ENCODE measurements at regions of chr16 and their contacts with region 1.

Region 1: DNA sequence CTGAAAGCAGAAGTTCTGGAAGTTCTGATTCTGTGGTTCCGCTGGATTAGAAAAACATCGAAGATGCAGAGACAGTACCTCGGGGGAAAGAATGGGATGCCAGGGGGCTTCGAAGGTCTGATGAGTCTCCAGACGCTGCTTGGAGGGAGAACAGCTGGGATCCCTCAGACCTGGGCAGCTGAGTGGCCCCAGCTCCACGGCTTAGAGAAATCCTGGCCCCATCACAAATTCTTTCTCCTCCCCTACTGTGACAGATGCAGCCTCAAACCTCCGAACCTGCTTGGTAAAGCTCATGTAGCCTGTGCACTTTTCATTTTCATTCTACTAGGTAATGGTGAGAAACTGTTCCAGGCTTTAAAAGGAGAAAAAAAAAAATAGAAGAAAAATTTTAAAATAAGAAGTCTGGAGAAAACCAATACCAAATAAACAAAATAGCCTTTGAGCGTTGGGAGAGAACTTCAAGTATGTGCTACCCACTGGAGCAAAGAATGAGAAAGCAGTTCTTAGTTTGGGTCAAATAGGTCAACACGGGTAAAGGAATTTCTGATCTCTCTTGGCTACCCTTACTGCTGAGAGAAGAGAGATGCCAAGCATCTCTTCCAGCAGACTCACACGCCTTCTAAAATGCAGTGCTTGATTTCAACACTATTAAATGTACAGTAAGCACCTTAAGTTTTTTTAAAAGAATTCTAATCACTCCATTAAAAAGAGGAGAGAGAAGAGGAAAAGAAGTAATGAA is 19.9 kb downstream of the MAF start:
- DNase-seq: no peak
- ATAC-seq: no peak
- H3K4me3 ChIP-seq: no peak overlapping the region
- H3K4me3 Mint-ChIP-seq: no peak overlapping the region
- H3K27ac ChIP-seq: no peak overlapping the region
- H3K27ac Mint-ChIP-seq: no peak overlapping the region
- H3K4me1 ChIP-seq: no peaks in the 10 kb centered on the region
- H3K4me1 Mint-ChIP-seq: no peaks in the 10 kb centered on the region
- H3K27me3 ChIP-seq: no peaks in the 10 kb centered on the region
- H3K27me3 Mint-ChIP-seq: peaks cover 28% of the 10 kb centered on the region
- CTCF ChIP-seq: no peak

Region 2: GRCh38 chr16:79593074-79593531 is 12.5 kb after region 1 on chr16:
- CTCF ChIA-PET with region 1: no interaction called
- POLR2A ChIA-PET with region 1: no interaction called
- intact Hi-C with region 1: loop called in 1 of 2 experiments (anchors 1 kb)
- DNase-seq: peak in 1 of 9 experiments; percentile 11
- ATAC-seq: no peak
- H3K4me3 ChIP-seq: no peak overlapping the region
- H3K4me3 Mint-ChIP-seq: peak overlapping the region; percentile 30
- H3K27ac ChIP-seq: no peak overlapping the region
- H3K27ac Mint-ChIP-seq: peak overlapping the region; percentile 43
- H3K4me1 ChIP-seq: no peaks in the 10 kb centered on the region
- H3K4me1 Mint-ChIP-seq: peaks cover 20% of the 10 kb centered on the region
- H3K27me3 ChIP-seq: peaks cover 0 to 4% of the 10 kb centered on the region in 2 experiments
- H3K27me3 Mint-ChIP-seq: peaks cover 23% of the 10 kb centered on the region
- CTCF ChIP-seq: no peak

Measured in CD8-positive, alpha-beta T cell (primary cell).